Ovary (tissue), 10 donors: ENCODE measurements at regions of chrX and their contacts with region 1.

Region 1: GRCh38 chrX:96126182-96126581 is 558.5 kb upstream of the DIAPH2 start:
- DNase-seq: no peak
- H3K4me3 ChIP-seq: no peak overlapping the region
- H3K27ac ChIP-seq: no peak overlapping the region
- H3K4me1 ChIP-seq: no peaks in the 10 kb centered on the region
- H3K27me3 ChIP-seq: no peaks in the 10 kb centered on the region
- CTCF ChIP-seq: no peak
- EP300 ChIP-seq: no peak
- POLR2A ChIP-seq: no peak

Region 2: GRCh38 chrX:97096385-97096784 is 970.2 kb after region 1 on chrX:
- intact Hi-C with region 1: no loop called
- DNase-seq: no peak
- H3K4me3 ChIP-seq: no peak overlapping the region
- H3K27ac ChIP-seq: no peak overlapping the region
- H3K4me1 ChIP-seq: no peaks in the 10 kb centered on the region
- H3K27me3 ChIP-seq: no peaks in the 10 kb centered on the region
- CTCF ChIP-seq: no peak
- EP300 ChIP-seq: no peak
- POLR2A ChIP-seq: no peak

Region 3: GRCh38 chrX:97616883-97617530 is 1490.8 kb after region 1 on chrX:
- intact Hi-C with region 1: loop called in 1 of 4 experiments (anchors 5 kb)
- DNase-seq: no peak
- H3K4me3 ChIP-seq: no peak overlapping the region
- H3K27ac ChIP-seq: no peak overlapping the region
- H3K4me1 ChIP-seq: no peaks in the 10 kb centered on the region
- H3K27me3 ChIP-seq: no peaks in the 10 kb centered on the region
- CTCF ChIP-seq: no peak
- EP300 ChIP-seq: no peak
- POLR2A ChIP-seq: no peak